Activated CD8-positive, alpha-beta T cell treated with anti-CD3 and anti-CD28 coated beads for 36 hours (primary cell): ENCODE measurements at regions of chr2 and their contacts with region 1.

Region 1: GRCh38 chr2:225041851-225042799 is at the start of gene DOCK10:
- DNase-seq: peak; percentile 42
- ATAC-seq: peak; percentile 28
- H3K4me3 Mint-ChIP-seq: peak within 1 kb of the TSS; percentile 99
- H3K27ac Mint-ChIP-seq: peak within 1 kb of the TSS; percentile 99
- H3K4me1 Mint-ChIP-seq: peaks cover 49% of the 10 kb centered on the region
- H3K27me3 Mint-ChIP-seq: no peaks in the 10 kb centered on the region
- CTCF ChIP-seq: no peak
- total RNA-seq, gene DOCK10: 191 to 198 TPM

Region 2: DNA sequence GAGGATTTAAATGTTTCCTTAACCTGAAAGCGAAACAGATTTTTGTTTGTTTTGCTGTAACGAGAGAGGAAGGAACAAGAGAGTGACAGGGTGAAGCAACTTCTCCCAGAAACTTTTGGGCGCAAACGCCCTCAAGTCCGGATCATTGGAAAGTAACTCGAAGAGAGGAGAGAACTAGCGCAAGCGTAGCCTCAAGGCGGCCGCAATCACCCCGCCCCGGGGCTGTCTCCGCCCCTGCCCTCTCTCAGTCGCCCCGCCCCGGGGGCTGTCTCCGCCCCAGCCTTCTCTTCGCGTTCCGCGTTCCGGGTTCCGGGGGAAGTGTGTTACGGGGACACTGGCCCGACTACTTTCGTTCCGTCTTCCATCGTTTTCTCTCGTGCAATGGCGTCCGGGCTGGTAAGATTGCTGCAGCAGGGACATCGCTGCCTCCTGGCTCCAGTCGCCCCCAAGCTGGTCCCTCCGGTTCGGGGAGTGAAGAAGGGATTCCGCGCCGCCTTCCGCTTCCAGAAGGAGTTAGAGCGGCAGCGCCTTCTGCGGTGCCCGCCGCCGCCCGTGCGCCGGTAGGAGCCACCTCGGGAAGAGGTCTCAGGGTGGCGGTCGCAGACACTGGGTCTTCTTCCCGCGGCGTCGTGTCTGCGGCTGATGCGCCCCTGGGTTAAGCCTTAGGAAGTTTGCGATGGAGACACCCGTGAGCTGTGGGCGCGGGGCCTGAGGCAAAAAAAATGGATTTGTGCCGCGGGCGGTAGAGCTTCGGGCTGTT is 1084.9 kb before region 1 on chr2 and contains the start of gene MRPL44:
- CTCF ChIA-PET with region 1: no interaction called
- POLR2A ChIA-PET with region 1: no interaction called
- intact Hi-C with region 1: loop called (anchors 10 kb)
- DNase-seq: peak; percentile 97
- ATAC-seq: peak; percentile 99
- H3K4me3 Mint-ChIP-seq: peak within 1 kb of the TSS; percentile 93
- H3K27ac Mint-ChIP-seq: peak within 1 kb of the TSS; percentile 90
- H3K4me1 Mint-ChIP-seq: peaks cover 72% of the 10 kb centered on the region
- H3K27me3 Mint-ChIP-seq: no peaks in the 10 kb centered on the region
- CTCF ChIP-seq: no peak
- total RNA-seq, gene MRPL44: 37.8 to 40.4 TPM

Region 3: DNA sequence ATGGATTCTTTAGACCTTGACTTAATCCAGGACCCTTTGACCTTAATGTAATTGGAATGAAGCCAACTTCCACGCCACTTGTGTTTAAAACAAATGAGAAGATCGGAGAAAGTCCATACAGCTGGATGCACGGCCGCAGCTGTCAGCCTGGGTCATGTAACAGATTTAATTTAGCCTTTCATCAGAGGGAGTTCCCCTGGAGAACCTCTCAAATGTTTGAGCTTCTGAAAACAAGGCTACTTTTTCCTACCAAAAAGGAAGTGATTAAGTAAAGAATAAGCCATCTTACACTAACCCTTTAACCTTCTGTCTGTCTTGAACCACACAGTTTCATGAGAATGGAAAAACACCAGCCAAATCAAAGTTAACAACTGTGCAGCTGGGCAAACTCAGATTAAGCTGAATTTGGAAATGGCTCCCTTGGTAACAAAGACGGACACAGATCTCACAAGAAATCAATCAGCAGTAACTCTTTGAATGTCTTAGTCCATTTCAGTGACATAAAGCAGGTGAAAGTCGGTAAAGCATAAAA is 103.4 kb before region 1 on chr2:
- CTCF ChIA-PET with region 1: interaction called, 3 read pairs
- POLR2A ChIA-PET with region 1: interaction called, 44 read pairs
- intact Hi-C with region 1: no loop called
- DNase-seq: peak; percentile 71
- ATAC-seq: peak; percentile 79
- H3K4me3 Mint-ChIP-seq: peak overlapping the region; percentile 67
- H3K27ac Mint-ChIP-seq: peak overlapping the region; percentile 87
- H3K4me1 Mint-ChIP-seq: peaks cover 76% of the 10 kb centered on the region
- H3K27me3 Mint-ChIP-seq: no peaks in the 10 kb centered on the region
- CTCF ChIP-seq: no peak

Region 4: GRCh38 chr2:224969633-224970260 is 72.4 kb before region 1 on chr2:
- CTCF ChIA-PET with region 1: no interaction called
- POLR2A ChIA-PET with region 1: no interaction called
- intact Hi-C with region 1: no loop called
- DNase-seq: no peak
- ATAC-seq: peak; percentile 69
- H3K4me3 Mint-ChIP-seq: peak overlapping the region; percentile 0
- H3K27ac Mint-ChIP-seq: peak overlapping the region; percentile 82
- H3K4me1 Mint-ChIP-seq: peaks cover 68% of the 10 kb centered on the region
- H3K27me3 Mint-ChIP-seq: no peaks in the 10 kb centered on the region
- CTCF ChIP-seq: no peak

Region 5: DNA sequence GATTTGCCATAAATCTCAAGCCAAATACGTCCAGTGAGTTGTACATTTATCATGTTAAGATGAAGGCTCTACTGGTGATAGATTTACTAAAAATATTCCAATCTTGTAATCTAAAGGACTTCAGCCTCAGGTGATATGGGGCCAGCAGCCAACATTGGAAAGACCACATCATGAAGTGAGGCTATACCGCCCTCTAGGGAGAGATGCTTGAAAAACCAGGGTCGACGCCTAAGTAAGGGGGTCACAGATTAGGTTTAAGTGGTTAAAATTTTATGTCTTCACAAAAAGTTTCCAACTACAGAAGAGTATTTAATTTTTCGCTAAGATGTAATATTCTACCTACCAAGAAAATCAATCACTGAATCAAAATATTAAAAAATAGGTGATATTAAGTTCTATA is 33.2 kb before region 1 on chr2:
- CTCF ChIA-PET with region 1: interaction called, 7 read pairs
- POLR2A ChIA-PET with region 1: interaction called, 7 read pairs
- intact Hi-C with region 1: loop called (anchors 2 kb)
- DNase-seq: peak; percentile 49
- ATAC-seq: no peak
- H3K4me3 Mint-ChIP-seq: no peak overlapping the region
- H3K27ac Mint-ChIP-seq: peak overlapping the region; percentile 56
- H3K4me1 Mint-ChIP-seq: peaks cover 93% of the 10 kb centered on the region
- H3K27me3 Mint-ChIP-seq: no peaks in the 10 kb centered on the region
- CTCF ChIP-seq: peak; percentile 58

Region 6: DNA sequence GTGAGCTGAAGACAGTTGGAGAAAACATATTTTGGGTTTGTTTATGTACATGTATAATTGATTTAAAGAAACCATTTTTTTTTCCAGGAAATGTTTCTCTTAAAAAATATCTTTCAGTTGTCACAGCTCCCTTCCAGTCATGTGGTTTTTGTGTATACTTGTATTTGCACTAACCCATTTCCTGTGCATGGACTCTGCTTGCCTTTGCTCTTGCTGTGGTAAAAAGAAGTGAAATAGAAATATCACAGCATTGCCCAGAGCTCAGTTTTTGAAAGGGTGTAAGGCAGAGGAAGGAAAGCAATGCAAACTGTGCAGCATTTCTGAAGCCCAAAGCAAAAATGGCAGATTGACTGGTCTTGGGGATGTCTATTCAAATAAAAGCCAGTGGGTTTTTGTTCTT is 10.6 kb after region 1 on chr2:
- CTCF ChIA-PET with region 1: interaction called, 8 read pairs
- POLR2A ChIA-PET with region 1: interaction called, 67 read pairs
- intact Hi-C with region 1: no loop called
- DNase-seq: peak; percentile 43
- ATAC-seq: peak; percentile 92
- H3K4me3 Mint-ChIP-seq: no peak overlapping the region
- H3K27ac Mint-ChIP-seq: peak overlapping the region; percentile 85
- H3K4me1 Mint-ChIP-seq: peaks cover 59% of the 10 kb centered on the region
- H3K27me3 Mint-ChIP-seq: no peaks in the 10 kb centered on the region
- CTCF ChIP-seq: no peak